PC-9 (cell line): ENCODE measurements at regions of chr7 and their contacts with region 1.

Region 1: GRCh38 chr7:92134271-92135051 is at the start of gene CYP51A1:
- DNase-seq: peak; percentile 80 to 95
- H3K4me3 ChIP-seq: peak within 1 kb of the TSS; percentile 65
- H3K27ac ChIP-seq: peak within 1 kb of the TSS; percentile 73
- H3K4me1 ChIP-seq: peaks cover 20% of the 10 kb centered on the region
- H3K27me3 ChIP-seq: no peaks in the 10 kb centered on the region
- CTCF ChIP-seq: no peak
- total RNA-seq, gene CYP51A1: 58.9 and 89.0 TPM in 2 replicates

Region 2: GRCh38 chr7:91940572-91941341 is 193.7 kb before region 1 on chr7 and contains the start of gene AKAP9:
- CTCF ChIA-PET with region 1: interaction called, 15 read pairs
- POLR2A ChIA-PET with region 1: no interaction called
- intact Hi-C with region 1: no loop called
- DNase-seq: peak; percentile 81 to 94
- H3K4me3 ChIP-seq: peak within 1 kb of the TSS; percentile 70
- H3K27ac ChIP-seq: peak within 1 kb of the TSS; percentile 78
- H3K4me1 ChIP-seq: peaks cover 30% of the 10 kb centered on the region
- H3K27me3 ChIP-seq: no peaks in the 10 kb centered on the region
- CTCF ChIP-seq: no peak
- total RNA-seq, gene AKAP9: 48.0 and 71.3 TPM in 2 replicates

Region 3: GRCh38 chr7:92076534-92076933 is 57.9 kb before region 1 on chr7:
- CTCF ChIA-PET with region 1: no interaction called
- POLR2A ChIA-PET with region 1: interaction called, 20 read pairs
- intact Hi-C with region 1: no loop called
- DNase-seq: peak; percentile 14 to 77
- H3K4me3 ChIP-seq: no peak overlapping the region
- H3K27ac ChIP-seq: peak overlapping the region; percentile 28; the same call in 1 of the 2 replicates
- H3K4me1 ChIP-seq: peaks cover 14% of the 10 kb centered on the region
- H3K27me3 ChIP-seq: no peaks in the 10 kb centered on the region
- CTCF ChIP-seq: no peak